K562 (cell line): ENCODE measurements at regions of chr17 and their contacts with region 1.

Region 1: GRCh38 chr17:39153599-39154051 is 2.2 kb upstream of the PLXDC1 start:
- DNase-seq: peak; percentile 70 to 87 (median 73)
- ATAC-seq: peak; percentile 73
- H3K4me3 ChIP-seq: peak overlapping the region; percentile 90
- H3K27ac ChIP-seq: peak overlapping the region; percentile 73
- H3K4me1 ChIP-seq: peaks cover 8 to 27% of the 10 kb centered on the region in 2 experiments; a peak in 2 of 5 replicates
- H3K27me3 ChIP-seq: peaks cover 7 to 27% of the 10 kb centered on the region in 2 experiments; a peak in 4 of 5 replicates
- CTCF ChIP-seq: 0 out of 6 replicates have a peak, but pooled peaks of 1 of the 3 experiments have one; percentile 6
- EP300 ChIP-seq: peak; percentile 71
- POLR2A ChIP-seq: no peak
- RAD21 ChIP-seq: no peak

Region 2: DNA sequence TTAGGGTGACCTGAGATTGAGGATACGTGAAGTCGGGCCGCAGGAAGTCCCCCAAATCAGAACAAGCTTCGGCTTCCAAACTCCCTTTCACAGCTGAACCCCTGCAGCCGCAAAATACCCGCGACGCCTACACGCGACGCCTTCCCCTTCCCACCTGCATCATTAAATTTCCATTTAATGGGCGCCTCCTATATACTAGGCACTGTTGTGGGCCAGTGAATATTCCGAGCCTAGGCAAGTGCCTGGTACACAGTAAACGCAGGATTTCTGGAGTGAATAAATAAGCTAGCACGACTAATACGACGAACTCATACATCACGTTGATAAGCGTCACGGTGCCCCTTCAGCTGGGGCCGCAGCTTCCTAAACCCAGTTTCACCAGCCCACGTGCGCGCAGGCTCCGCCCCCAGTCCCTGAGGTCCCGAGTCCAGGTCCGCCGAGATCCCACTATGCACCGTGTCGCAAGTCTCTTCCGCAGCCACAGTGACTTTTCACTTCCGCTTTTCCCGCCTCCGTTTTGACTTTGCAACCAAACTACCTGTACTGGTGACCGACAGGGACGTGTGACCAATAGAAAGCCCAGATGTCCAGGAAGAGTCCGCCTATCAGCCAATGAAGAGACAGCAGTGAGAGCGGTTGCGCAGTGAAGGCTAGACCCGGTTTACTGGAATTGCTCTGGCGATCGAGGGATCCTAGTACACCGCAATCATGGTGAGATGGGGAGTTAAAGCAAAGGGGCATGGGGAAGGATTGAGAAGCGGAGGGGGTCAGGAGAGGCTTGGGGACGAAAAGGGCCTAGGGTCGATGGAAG is 401.3 kb before region 1 on chr17 and contains the start of gene PSMB3:
- CTCF ChIA-PET with region 1: no interaction called
- POLR2A ChIA-PET with region 1: interaction called, 3 read pairs
- in situ Hi-C with region 1: no loop called
- intact Hi-C with region 1: loop called (anchors 10 kb)
- DNase-seq: peak; percentile 95 to 99 (median 97)
- ATAC-seq: peak; percentile 84
- H3K4me3 ChIP-seq: peak within 1 kb of the TSS; percentile 74
- H3K27ac ChIP-seq: peak within 1 kb of the TSS; percentile 87
- H3K4me1 ChIP-seq: peaks cover 7 to 42% of the 10 kb centered on the region in 2 experiments
- H3K27me3 ChIP-seq: no peaks in the 10 kb centered on the region
- CTCF ChIP-seq: no peak
- EP300 ChIP-seq: peak; percentile 25; the same call in 1 of the 2 replicates
- POLR2A ChIP-seq: peak; percentile 90
- RAD21 ChIP-seq: no peak
- polyA plus RNA-seq, gene PSMB3: 2,413 to 2,775 TPM

Region 3: GRCh38 chr17:38982858-38983746 is 170.5 kb before region 1 on chr17:
- CTCF ChIA-PET with region 1: interaction called, 43 read pairs
- POLR2A ChIA-PET with region 1: interaction called, 4 read pairs
- in situ Hi-C with region 1: loop called (anchors 5 kb)
- intact Hi-C with region 1: loop called (anchors 1 kb)
- DNase-seq: peak; percentile 42 to 79 (median 58)
- ATAC-seq: peak; percentile 86
- H3K4me3 ChIP-seq: no peak overlapping the region
- H3K27ac ChIP-seq: no peak overlapping the region
- H3K4me1 ChIP-seq: no peaks in the 10 kb centered on the region; a peak in 1 of 5 replicates
- H3K27me3 ChIP-seq: no peaks in the 10 kb centered on the region; a peak in 1 of 5 replicates
- CTCF ChIP-seq: peak; percentile 77 to 95 (median 83)
- EP300 ChIP-seq: no peak
- POLR2A ChIP-seq: no peak
- RAD21 ChIP-seq: peak; percentile 95 to 98

Region 4: DNA sequence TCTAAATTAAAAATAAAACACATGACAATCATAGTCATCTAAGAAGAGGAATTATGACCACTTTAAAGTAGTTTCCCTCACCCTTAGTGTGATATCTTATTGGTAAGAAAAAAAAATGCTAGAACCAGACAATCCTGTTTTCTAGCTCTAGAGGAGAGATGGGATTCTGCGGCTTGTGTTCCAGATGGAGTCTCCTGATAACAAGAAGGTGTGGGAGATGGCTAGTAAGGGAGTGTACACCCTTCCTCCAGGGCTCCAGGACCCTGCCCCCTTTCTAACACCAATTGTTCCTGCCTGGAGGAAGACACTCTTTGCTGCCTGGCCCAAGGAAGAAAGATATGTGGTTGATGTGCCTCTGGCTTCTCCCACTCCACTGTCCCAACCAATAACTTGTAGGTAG is 117.6 kb before region 1 on chr17:
- CTCF ChIA-PET with region 1: no interaction called
- POLR2A ChIA-PET with region 1: no interaction called
- in situ Hi-C with region 1: no loop called
- intact Hi-C with region 1: no loop called
- DNase-seq: peak; percentile 77 to 84 (median 80)
- ATAC-seq: peak; percentile 83
- H3K4me3 ChIP-seq: no peak overlapping the region
- H3K27ac ChIP-seq: no peak overlapping the region
- H3K4me1 ChIP-seq: peaks cover 7 to 8% of the 10 kb centered on the region in 2 experiments; a peak in 4 of 5 replicates
- H3K27me3 ChIP-seq: 0 out of 5 replicates have a peak, but pooled peaks cover 0 to 2% of the 10 kb centered on the region in 2 experiments
- CTCF ChIP-seq: no peak
- EP300 ChIP-seq: peak; percentile 63
- POLR2A ChIP-seq: no peak
- RAD21 ChIP-seq: no peak

Region 5: DNA sequence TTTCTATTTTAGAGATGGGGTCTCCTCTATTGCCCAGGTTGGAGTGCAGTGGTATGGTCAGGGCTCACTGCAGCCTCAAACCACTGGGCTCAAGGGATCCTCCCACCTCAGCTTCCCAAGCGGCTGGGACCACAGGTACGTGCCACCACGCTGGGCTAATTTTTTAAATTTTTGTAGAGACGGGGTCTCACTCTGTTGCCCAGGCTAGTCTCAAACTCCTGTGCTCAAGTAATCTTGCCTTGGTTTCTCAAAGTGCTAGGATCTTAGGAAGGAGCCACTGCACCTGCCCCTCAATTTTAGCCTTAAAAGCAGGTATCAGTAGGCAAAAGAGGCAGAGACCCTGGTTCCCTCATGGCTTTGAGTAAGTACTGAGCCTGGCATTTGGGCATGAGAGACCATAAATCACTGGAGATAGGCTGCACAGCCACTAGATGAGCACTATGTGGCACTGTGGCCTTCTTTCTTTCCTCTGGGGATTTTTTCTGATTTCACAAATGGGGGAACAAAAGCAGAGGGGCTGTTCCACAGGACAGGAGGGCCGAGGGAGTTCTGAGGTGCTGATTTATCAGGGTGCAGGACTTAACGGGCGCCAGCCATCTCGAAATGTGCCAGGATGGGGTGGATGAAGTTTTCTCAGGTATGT is 84.4 kb before region 1 on chr17:
- CTCF ChIA-PET with region 1: interaction called, 11 read pairs
- POLR2A ChIA-PET with region 1: no interaction called
- in situ Hi-C with region 1: no loop called
- intact Hi-C with region 1: loop called (anchors 5 kb)
- DNase-seq: peak in 3 of 4 experiments; percentile 25 to 48 (median 35)
- ATAC-seq: peak; percentile 69
- H3K4me3 ChIP-seq: no peak overlapping the region
- H3K27ac ChIP-seq: no peak overlapping the region
- H3K4me1 ChIP-seq: no peaks in the 10 kb centered on the region; a peak in 1 of 5 replicates
- H3K27me3 ChIP-seq: peaks cover 33 to 65% of the 10 kb centered on the region in 2 experiments; a peak in 4 of 5 replicates
- CTCF ChIP-seq: peak; percentile 43 to 71 (median 53); a peak in 5 of 6 replicates
- EP300 ChIP-seq: no peak
- POLR2A ChIP-seq: no peak
- RAD21 ChIP-seq: peak; percentile 44 to 59

Region 6: DNA sequence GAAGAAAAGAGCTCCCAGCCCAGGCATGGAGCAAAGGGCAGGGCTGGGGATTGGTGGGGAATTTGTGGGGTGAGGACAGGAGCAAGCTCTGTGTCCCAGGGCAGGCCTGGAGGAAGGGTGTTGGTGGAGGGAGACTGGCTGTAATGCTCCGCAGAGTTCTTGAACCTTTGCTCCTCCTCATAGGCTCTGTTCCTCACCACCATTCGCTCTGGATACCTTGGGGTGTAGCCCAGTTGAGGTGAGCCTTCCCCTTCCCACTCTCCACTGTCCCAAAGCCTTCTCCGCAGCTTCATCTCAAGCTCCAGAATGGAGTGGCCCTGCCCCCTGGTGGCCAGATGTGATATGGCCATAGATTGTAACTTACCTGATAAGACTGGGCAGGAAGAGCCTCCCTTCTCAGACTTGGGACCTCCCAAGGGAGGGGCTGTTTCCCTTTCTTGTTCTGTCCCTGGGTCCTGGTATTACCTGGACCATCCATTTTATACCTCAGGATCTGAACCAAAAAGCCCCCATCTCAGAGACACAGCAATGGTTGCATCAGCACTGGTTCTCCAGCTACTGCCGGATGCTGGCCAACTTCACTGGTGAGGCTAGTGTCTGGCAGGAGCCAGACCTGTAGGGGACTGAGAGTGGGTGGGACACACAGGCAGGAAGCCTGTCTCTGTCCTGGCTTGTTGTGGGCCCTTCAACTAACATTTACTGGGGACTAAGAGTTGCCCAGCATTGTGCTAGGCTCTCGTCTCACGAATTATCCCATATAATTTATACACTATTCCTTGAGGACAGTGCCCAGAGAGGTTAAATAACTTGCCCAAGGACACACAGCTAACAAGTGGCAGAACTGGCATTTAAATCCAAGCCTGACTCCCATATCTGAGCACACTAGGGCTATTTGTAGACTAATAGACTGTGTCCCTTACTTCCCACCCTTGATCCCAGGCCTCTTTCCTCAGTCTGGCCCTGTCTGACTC is 91.3 kb after region 1 on chr17:
- CTCF ChIA-PET with region 1: no interaction called
- POLR2A ChIA-PET with region 1: interaction called, 3 read pairs
- in situ Hi-C with region 1: no loop called
- intact Hi-C with region 1: loop called (anchors 10 kb)
- DNase-seq: peak; percentile 81 to 93 (median 84)
- ATAC-seq: peak; percentile 95
- H3K4me3 ChIP-seq: no peak overlapping the region
- H3K27ac ChIP-seq: no peak overlapping the region
- H3K4me1 ChIP-seq: peaks cover 2 to 10% of the 10 kb centered on the region in 2 experiments; a peak in 3 of 5 replicates
- H3K27me3 ChIP-seq: no peaks in the 10 kb centered on the region
- CTCF ChIP-seq: peak; percentile 94 to 99 (median 95)
- EP300 ChIP-seq: no peak
- POLR2A ChIP-seq: no peak
- RAD21 ChIP-seq: peak; percentile 65 to 86